MCF 10A (cell line): ENCODE measurements at regions of chr5 and their contacts with region 1.

Region 1: DNA sequence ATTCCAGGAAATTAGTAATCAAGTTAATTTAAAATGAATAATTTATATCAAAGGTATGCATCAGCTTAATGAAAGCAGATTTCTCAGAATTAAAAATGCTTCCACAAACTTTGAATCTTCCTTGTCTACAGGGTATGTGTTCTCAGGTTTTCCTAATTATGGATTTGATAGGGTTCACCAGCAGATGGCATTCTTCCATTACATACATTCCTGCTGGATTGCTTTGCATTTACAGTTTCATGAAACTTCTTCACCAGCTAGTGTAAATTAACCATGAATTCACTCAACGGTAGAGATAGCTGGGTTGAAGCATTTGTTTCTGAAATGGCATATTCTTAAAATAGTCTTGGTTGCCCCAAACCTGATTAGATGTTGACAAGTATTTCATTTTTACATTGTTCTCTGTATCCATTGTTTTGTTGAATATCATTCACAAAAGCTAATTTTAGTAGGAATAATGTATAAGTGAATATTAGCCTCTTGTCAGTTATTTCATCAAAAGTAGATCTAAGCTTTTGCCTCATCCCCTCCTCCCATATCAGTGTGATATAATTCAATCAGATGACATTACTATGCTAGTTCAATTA is 68.7 kb upstream of the WDR41 start:
- DNase-seq: peak; percentile 52
- H3K4me3 Mint-ChIP-seq: no peak overlapping the region
- H3K27ac Mint-ChIP-seq: no peak overlapping the region
- H3K4me1 Mint-ChIP-seq: no peaks in the 10 kb centered on the region
- H3K27me3 Mint-ChIP-seq: no peaks in the 10 kb centered on the region
- CTCF ChIP-seq: peak; percentile 61

Region 2: GRCh38 chr5:75847561-75848021 is 1713.2 kb before region 1 on chr5:
- CTCF ChIA-PET with region 1: no interaction called
- POLR2A ChIA-PET with region 1: no interaction called
- intact Hi-C with region 1: no loop called
- DNase-seq: no peak
- H3K4me3 Mint-ChIP-seq: no peak overlapping the region
- H3K27ac Mint-ChIP-seq: no peak overlapping the region
- H3K4me1 Mint-ChIP-seq: no peaks in the 10 kb centered on the region
- H3K27me3 Mint-ChIP-seq: peaks cover 78% of the 10 kb centered on the region
- CTCF ChIP-seq: no peak

Region 3: GRCh38 chr5:77859306-77859705 is 298.5 kb after region 1 on chr5:
- CTCF ChIA-PET with region 1: no interaction called
- POLR2A ChIA-PET with region 1: no interaction called
- intact Hi-C with region 1: loop called (anchors 2 kb)
- DNase-seq: no peak
- H3K4me3 Mint-ChIP-seq: no peak overlapping the region
- H3K27ac Mint-ChIP-seq: no peak overlapping the region
- H3K4me1 Mint-ChIP-seq: no peaks in the 10 kb centered on the region
- H3K27me3 Mint-ChIP-seq: no peaks in the 10 kb centered on the region
- CTCF ChIP-seq: no peak

Region 4: DNA sequence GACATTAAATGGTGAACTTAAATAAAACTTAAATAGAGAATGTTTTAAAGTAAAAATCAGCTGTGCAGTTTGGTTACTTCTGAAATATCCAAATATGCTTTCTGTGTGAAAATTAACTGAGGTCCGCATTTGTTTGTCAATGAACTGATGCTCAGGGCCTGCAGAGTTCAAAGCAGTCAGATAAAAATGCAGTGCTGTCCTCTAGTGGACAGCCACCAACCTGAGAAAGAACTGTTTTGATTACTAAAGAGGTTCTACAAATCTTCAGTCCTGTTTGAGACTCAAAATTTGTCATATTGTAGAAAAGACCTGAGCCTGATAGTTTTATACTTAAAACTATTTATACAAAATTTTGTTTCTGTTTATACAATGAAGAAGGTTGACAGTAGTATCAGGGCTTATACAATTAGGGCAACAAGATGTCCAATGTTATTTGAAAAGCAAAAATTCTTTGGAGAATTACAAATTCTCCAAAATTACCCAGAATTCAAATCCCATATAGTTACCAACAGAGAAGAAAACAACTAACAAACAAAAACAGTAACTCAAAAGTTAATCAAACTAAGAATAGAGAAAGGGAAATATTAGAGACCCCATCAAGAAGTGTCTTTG is 447.7 kb after region 1 on chr5:
- CTCF ChIA-PET with region 1: interaction called, 24 read pairs
- POLR2A ChIA-PET with region 1: no interaction called
- intact Hi-C with region 1: loop called (anchors 1 kb)
- DNase-seq: peak; percentile 54
- H3K4me3 Mint-ChIP-seq: no peak overlapping the region
- H3K27ac Mint-ChIP-seq: no peak overlapping the region
- H3K4me1 Mint-ChIP-seq: no peaks in the 10 kb centered on the region
- H3K27me3 Mint-ChIP-seq: no peaks in the 10 kb centered on the region
- CTCF ChIP-seq: peak; percentile 83

Region 5: GRCh38 chr5:78268356-78268755 is 707.6 kb after region 1 on chr5:
- CTCF ChIA-PET with region 1: interaction called, 8 read pairs
- POLR2A ChIA-PET with region 1: interaction called, 4 read pairs
- intact Hi-C with region 1: loop called (anchors 1 kb)
- DNase-seq: no peak
- H3K4me3 Mint-ChIP-seq: no peak overlapping the region
- H3K27ac Mint-ChIP-seq: no peak overlapping the region
- H3K4me1 Mint-ChIP-seq: peaks cover 9% of the 10 kb centered on the region
- H3K27me3 Mint-ChIP-seq: no peaks in the 10 kb centered on the region
- CTCF ChIP-seq: no peak

Region 6: GRCh38 chr5:78964887-78965286 is 1404.1 kb after region 1 on chr5:
- CTCF ChIA-PET with region 1: no interaction called
- POLR2A ChIA-PET with region 1: no interaction called
- intact Hi-C with region 1: loop called (anchors 5 kb)
- DNase-seq: peak; percentile 59
- H3K4me3 Mint-ChIP-seq: no peak overlapping the region
- H3K27ac Mint-ChIP-seq: no peak overlapping the region
- H3K4me1 Mint-ChIP-seq: no peaks in the 10 kb centered on the region
- H3K27me3 Mint-ChIP-seq: no peaks in the 10 kb centered on the region
- CTCF ChIP-seq: peak; percentile 53